Activated CD4-positive, alpha-beta T cell treated with anti-CD3 and anti-CD28 coated beads, Interleukin-2, amount 10 ng/mL, durations not matched to agents 24 days and 14 days (primary cell): ENCODE measurements at regions of chr1 and their contacts with region 1.

Region 1: GRCh38 chr1:117059678-117060440 is at the start of gene TTF2:
- DNase-seq: peak; percentile 99
- H3K4me3 Mint-ChIP-seq: no peak within 1 kb of the TSS
- H3K27ac Mint-ChIP-seq: no peak within 1 kb of the TSS
- H3K4me1 Mint-ChIP-seq: peaks cover 41% of the 10 kb centered on the region
- H3K27me3 Mint-ChIP-seq: no peaks in the 10 kb centered on the region
- total RNA-seq, gene TTF2: 108 and 116 TPM in 2 replicates

Region 2: GRCh38 chr1:116257341-116257767 is 802.5 kb before region 1 on chr1:
- intact Hi-C with region 1: loop called (anchors 10 kb)
- DNase-seq: peak; percentile 63
- H3K4me3 Mint-ChIP-seq: no peak overlapping the region
- H3K27ac Mint-ChIP-seq: peak overlapping the region; percentile 39
- H3K4me1 Mint-ChIP-seq: peaks cover 23% of the 10 kb centered on the region
- H3K27me3 Mint-ChIP-seq: no peaks in the 10 kb centered on the region

Region 3: DNA sequence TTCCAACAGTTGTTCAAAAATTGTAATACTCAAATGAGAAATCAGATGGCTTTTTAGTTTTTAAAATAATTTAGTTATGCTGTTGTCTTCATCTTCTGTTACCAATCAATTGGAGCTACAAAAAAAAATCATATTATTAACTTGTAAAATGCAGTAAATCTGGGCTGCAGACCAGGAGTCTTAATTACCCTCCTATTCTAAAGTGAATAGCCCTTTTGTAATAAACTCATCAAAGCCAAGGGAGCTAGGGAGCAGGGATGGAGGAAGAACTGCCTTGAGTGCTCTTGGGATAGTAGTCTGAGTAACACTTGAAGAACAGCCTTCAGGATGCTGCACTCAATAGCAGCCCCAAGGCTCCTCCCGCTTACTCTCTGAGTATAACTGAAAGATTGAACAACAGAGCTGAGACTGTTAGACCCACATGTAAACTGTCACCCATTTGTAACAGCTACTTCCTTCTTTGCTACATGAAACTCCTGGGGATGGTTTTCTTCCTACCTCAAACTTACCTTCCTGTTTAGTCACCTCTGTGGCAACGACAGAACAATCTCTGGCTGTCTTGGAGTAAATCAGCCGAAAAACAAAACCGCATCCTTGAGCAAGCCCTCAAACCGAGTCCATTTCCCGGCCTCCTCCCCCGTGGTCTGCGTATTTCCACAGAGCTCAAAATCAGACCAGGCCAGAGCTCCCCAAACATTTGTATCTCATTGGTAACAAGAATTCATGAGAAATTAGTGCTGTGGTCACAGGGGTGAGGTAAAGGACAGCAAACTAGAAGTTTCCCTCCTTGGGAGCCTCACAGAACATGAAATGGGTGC is 544.9 kb before region 1 on chr1:
- intact Hi-C with region 1: loop called (anchors 5 kb)
- DNase-seq: peak; percentile 92
- H3K4me3 Mint-ChIP-seq: peak overlapping the region; percentile 76
- H3K27ac Mint-ChIP-seq: peak overlapping the region; percentile 93
- H3K4me1 Mint-ChIP-seq: peaks cover 64% of the 10 kb centered on the region
- H3K27me3 Mint-ChIP-seq: no peaks in the 10 kb centered on the region

Region 4: GRCh38 chr1:116667575-116668105 is 392.2 kb before region 1 on chr1 and contains the start of gene IGSF3:
- intact Hi-C with region 1: loop called (anchors 5 kb)
- DNase-seq: peak; percentile 84
- H3K4me3 Mint-ChIP-seq: peak within 1 kb of the TSS; percentile 82
- H3K27ac Mint-ChIP-seq: no peak within 1 kb of the TSS
- H3K4me1 Mint-ChIP-seq: peaks cover 8% of the 10 kb centered on the region
- H3K27me3 Mint-ChIP-seq: peaks cover 62% of the 10 kb centered on the region
- total RNA-seq, gene IGSF3: 2.1 and 2.2 TPM in 2 replicates

Region 5: GRCh38 chr1:116731439-116731838 is 328.4 kb before region 1 on chr1:
- intact Hi-C with region 1: no loop called
- DNase-seq: no peak
- H3K4me3 Mint-ChIP-seq: no peak overlapping the region
- H3K27ac Mint-ChIP-seq: peak overlapping the region; percentile 14
- H3K4me1 Mint-ChIP-seq: peaks cover 42% of the 10 kb centered on the region
- H3K27me3 Mint-ChIP-seq: no peaks in the 10 kb centered on the region

Region 6: DNA sequence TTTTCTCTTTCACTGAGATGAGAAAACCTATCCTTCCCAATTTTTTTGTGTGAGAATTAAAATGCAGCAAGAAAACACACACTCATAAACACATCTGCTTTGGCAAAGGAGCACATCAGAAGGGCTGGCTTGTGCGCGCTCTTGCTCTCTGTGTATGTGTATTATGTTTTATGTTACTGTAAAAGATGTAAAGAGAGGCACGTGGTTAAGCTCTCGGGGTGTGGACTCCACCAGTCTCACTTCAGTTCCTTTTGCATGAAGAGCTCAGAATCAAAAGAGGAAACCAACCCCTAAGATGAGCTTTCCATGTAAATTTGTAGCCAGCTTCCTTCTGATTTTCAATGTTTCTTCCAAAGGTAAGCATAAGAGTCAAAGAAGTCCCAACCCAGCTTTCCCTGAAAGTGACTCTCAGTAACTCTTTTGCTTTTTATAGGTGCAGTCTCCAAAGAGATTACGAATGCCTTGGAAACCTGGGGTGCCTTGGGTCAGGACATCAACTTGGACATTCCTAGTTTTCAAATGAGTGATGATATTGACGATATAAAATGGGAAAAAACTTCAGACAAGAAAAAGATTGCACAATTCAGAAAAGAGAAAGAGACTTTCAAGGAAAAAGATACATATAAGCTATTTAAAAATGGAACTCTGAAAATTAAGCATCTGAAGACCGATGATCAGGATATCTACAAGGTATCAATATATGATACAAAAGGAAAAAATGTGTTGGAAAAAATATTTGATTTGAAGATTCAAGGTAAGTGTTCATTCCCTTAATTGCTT is 305.5 kb before region 1 on chr1 and contains the start of gene CD2:
- intact Hi-C with region 1: loop called (anchors 2 kb)
- DNase-seq: peak; percentile 89
- H3K4me3 Mint-ChIP-seq: peak within 1 kb of the TSS; percentile 98
- H3K27ac Mint-ChIP-seq: peak within 1 kb of the TSS; percentile 97
- H3K4me1 Mint-ChIP-seq: peaks cover 27% of the 10 kb centered on the region
- H3K27me3 Mint-ChIP-seq: no peaks in the 10 kb centered on the region
- total RNA-seq, gene CD2: 500 and 501 TPM in 2 replicates

Region 7: GRCh38 chr1:116826818-116827606 is 232.8 kb before region 1 on chr1:
- intact Hi-C with region 1: loop called (anchors 1 kb)
- DNase-seq: peak; percentile 91
- H3K4me3 Mint-ChIP-seq: peak overlapping the region; percentile 76
- H3K27ac Mint-ChIP-seq: peak overlapping the region; percentile 93
- H3K4me1 Mint-ChIP-seq: peaks cover 59% of the 10 kb centered on the region
- H3K27me3 Mint-ChIP-seq: no peaks in the 10 kb centered on the region

Region 8: GRCh38 chr1:116990612-116991151 is 69.2 kb before region 1 on chr1:
- intact Hi-C with region 1: no loop called
- DNase-seq: no peak
- H3K4me3 Mint-ChIP-seq: no peak overlapping the region
- H3K27ac Mint-ChIP-seq: no peak overlapping the region
- H3K4me1 Mint-ChIP-seq: peaks cover 33% of the 10 kb centered on the region
- H3K27me3 Mint-ChIP-seq: no peaks in the 10 kb centered on the region

Region 9: DNA sequence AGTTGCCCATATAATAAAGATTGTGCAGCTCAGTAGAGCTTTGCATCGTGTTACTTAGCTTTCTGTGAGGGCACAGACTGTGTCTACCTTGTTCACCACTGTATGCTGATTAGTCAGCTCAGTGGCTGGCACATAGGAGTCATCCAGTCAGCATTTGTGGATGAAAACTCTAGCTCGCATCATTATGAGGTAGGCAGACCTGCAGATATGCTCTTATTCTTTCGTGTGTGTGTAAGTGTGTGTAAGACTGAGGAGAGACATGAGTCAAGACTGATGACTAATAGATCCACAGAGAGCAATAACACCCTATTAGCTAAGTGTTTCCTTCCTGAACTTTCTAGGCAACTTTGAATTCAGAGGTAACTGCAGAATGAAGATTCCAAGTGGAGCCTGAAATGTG is 17.4 kb after region 1 on chr1:
- intact Hi-C with region 1: loop called (anchors 1 kb)
- DNase-seq: no peak
- H3K4me3 Mint-ChIP-seq: no peak overlapping the region
- H3K27ac Mint-ChIP-seq: peak overlapping the region; percentile 91
- H3K4me1 Mint-ChIP-seq: peaks cover 17% of the 10 kb centered on the region
- H3K27me3 Mint-ChIP-seq: no peaks in the 10 kb centered on the region

Region 10: GRCh38 chr1:117128323-117129079 is 68.6 kb after region 1 on chr1:
- intact Hi-C with region 1: no loop called
- DNase-seq: no peak
- H3K4me3 Mint-ChIP-seq: no peak overlapping the region
- H3K27ac Mint-ChIP-seq: no peak overlapping the region
- H3K4me1 Mint-ChIP-seq: no peaks in the 10 kb centered on the region
- H3K27me3 Mint-ChIP-seq: peaks cover 22% of the 10 kb centered on the region